ENCODE measurements at regions of chr2 and their contacts with region 1.

Region 1: DNA sequence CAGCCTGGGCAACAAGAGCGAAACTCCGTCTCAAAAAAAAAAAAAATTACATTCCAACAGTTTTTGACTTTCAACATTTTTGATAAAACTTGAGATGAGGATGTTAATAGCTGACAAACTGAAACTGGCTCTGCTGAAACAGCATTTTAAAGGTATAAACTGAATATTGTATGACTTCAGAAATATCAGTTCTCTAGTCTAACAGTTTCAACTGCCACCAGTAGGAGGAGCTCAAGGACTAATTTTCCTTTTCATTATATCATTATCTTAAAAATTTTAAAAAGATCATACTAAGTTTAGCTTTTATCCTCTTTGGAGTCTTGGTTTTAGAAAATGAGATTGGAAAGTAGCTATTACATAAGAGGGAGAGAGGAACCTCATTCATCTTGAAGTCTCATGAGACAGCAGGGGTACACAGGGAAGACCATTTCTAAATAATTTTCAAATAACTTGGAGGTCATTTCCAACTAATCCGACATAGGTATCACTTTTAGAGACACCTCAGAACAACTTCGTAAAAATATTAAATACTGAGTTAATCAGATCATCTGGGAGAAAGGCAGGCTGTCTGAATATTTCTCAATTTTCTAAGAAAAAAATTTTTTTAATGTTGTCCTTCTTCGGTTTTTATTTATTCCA is 37.6 kb upstream of the MCM6 start:
- DNase-seq: peak; percentile 21 to 54 (median 30)
- ATAC-seq: peak; percentile 45
- H3K4me3 ChIP-seq: no peak overlapping the region
- H3K27ac ChIP-seq: no peak overlapping the region
- H3K4me1 ChIP-seq: no peaks in the 10 kb centered on the region
- H3K27me3 ChIP-seq: no peaks in the 10 kb centered on the region
- CTCF ChIP-seq: peak; percentile 29 to 68 (median 61)
- POLR2A ChIP-seq: no peak

Region 2: DNA sequence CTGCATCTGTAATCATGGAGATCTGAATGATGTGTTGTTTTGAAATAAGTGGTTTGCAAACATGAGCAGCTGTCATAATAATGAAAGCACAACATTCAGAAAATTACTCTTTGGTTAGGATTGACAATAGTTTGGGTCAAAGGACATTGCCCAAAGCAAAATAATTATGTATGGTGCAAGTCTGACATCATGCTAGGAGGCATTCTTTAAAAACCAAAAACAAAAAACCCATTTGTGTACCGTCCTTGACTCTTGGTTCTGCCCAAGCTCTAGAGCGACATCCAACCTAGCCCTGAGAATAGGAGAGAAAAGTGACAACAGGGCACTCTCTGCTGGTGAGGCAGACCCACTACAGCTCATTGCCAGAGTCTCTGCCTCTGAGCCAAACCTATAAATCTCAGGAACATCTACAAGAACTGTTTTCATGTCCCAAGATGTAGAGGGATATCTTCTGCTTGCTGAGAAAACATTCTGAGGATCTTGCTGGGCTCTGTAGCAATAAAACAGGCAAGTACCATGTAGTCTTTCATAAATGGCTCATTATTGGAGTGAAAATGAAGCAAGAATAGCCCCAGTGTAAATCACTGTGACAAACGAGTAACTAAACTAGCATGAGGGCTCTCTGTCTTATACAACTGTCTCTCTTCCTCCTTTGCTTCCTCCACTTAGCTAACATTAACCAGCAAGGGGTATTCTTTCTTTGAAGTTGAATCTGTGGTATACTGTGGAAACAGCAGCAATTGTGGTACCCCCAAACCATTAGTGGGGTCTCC is 470.9 kb after region 1 on chr2:
- intact Hi-C with region 1: loop called (anchors 10 kb)
- DNase-seq: peak in 2 of 4 donors; percentile 22 to 27
- ATAC-seq: peak; percentile 50
- H3K4me3 ChIP-seq: no peak overlapping the region
- H3K27ac ChIP-seq: no peak overlapping the region
- H3K4me1 ChIP-seq: no peaks in the 10 kb centered on the region
- H3K27me3 ChIP-seq: no peaks in the 10 kb centered on the region
- CTCF ChIP-seq: peak in 6 of 7 experiments; percentile 22 to 54 (median 44)
- POLR2A ChIP-seq: no peak